A549 (cell line): ENCODE measurements at regions of chr1 and their contacts with region 1.

Region 1: GRCh38 chr1:22861764-22862440 is 110.8 kb downstream of the LACTBL1 start:
- DNase-seq: peak; percentile 30 to 46
- ATAC-seq: peak; percentile 71 to 88; a peak in 5 of 6 replicates
- H3K4me3 ChIP-seq: no peak overlapping the region
- H3K27ac ChIP-seq: peak overlapping the region in 1 of 2 experiments; percentile 59; a peak in 3 of 6 replicates
- H3K4me1 ChIP-seq: peaks cover 9% of the 10 kb centered on the region; the same call in 2 of the 3 replicates
- CTCF ChIP-seq: peak; percentile 49
- EP300 ChIP-seq: no peak
- POLR2A ChIP-seq: no peak
- RAD21 ChIP-seq: peak; percentile 60 to 69

Region 2: GRCh38 chr1:22850681-22851080 is 11.2 kb before region 1 on chr1:
- CTCF ChIA-PET with region 1: interaction called, 20 read pairs
- POLR2A ChIA-PET with region 1: no interaction called
- DNase-seq: no peak
- ATAC-seq: no peak
- H3K4me3 ChIP-seq: no peak overlapping the region
- H3K27ac ChIP-seq: no peak overlapping the region
- H3K4me1 ChIP-seq: no peaks in the 10 kb centered on the region
- CTCF ChIP-seq: no peak
- EP300 ChIP-seq: no peak
- POLR2A ChIP-seq: no peak
- RAD21 ChIP-seq: no peak

Region 3: DNA sequence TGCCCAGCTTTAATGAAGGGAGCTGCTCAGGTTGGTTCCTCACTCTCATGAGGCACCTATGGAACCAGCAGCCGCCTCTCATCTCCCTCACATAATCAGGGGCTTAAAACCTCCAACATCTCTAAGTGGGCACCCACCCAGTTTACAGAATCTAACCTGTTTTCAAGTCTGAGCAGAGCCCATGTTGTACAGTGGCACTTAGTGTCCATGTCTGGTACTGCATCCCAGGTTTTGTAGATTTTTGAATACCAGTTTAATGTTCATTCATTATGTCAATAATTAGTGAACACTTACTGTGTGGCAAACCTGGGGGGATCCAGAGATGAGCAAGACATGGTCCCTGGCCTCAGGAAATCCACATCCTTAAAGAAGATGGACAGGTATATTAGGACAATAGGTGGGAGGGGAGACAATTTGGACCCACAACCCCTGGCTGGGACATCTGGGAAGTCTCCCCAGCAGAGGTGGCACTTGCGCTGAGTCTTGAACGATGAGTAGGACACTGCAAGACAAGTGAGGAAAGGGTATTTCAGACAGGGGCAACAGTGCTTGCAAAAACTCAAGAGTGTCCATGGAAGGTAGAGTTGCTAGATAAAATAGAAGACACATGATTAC is 27.4 kb after region 1 on chr1:
- CTCF ChIA-PET with region 1: interaction called, 10 read pairs
- POLR2A ChIA-PET with region 1: no interaction called
- DNase-seq: peak; percentile 33 to 41
- ATAC-seq: peak; percentile 74 to 82; a peak in 4 of 6 replicates
- H3K4me3 ChIP-seq: no peak overlapping the region
- H3K27ac ChIP-seq: peak overlapping the region in 1 of 2 experiments; percentile 65; a peak in 2 of 6 replicates
- H3K4me1 ChIP-seq: no peaks in the 10 kb centered on the region
- CTCF ChIP-seq: peak; percentile 59
- EP300 ChIP-seq: no peak
- POLR2A ChIP-seq: no peak
- RAD21 ChIP-seq: peak; percentile 67 to 68